Psoas muscle (tissue), 8 donors: ENCODE measurements at regions of chr1 and their contacts with region 1.

Region 1: DNA sequence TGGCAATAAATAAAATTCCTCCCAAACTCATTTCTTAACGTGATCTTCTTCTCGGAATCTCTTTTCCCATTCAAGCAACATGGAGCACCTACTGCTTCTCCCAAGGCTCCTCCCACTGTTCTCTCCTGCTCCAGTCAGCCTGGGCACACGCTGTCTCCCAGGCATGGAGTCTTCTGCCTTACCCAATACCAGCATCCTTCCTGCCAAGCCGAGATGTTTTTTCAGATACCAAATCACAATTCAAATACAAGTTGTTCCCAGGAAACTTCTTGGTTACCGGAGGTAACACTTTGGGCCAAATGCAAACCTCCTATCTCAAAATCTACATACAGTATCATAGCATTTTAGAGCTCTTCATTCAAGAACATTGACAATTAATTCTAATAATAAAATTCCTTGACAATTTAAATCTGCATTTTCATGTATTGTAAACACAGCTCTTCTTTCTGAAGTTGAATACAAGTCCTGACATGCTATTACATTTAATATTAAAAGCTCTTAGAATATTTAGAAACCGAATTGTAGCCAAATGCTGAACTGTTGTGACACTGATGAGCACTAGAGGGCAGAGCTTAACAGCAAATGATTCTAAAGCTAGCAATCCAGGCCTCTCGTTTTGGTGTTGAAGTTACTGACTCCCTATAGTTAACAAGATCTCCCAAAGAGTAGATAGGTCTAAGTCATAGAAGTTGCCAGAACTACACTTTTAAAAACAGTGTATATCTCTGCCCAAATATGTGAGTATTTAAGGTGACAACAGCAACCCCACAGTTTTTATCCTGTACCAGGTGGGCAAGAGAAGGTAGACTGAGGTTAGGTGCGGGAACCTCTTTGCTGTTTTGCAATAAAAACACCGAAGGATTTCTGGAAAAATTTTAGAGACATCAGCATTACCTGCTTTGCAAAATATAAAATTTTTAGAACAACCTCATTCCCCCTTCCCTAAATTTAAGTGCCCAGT is 52.3 kb downstream of the BCAR3 start:
- DNase-seq: no peak
- ATAC-seq: peak; percentile 78 to 89 (median 80)
- H3K4me3 ChIP-seq: no peak overlapping the region
- H3K27ac ChIP-seq: no peak overlapping the region
- H3K4me1 ChIP-seq: peaks cover 4% of the 10 kb centered on the region
- H3K27me3 ChIP-seq: no peaks in the 10 kb centered on the region
- CTCF ChIP-seq: peak; percentile 83

Region 2: DNA sequence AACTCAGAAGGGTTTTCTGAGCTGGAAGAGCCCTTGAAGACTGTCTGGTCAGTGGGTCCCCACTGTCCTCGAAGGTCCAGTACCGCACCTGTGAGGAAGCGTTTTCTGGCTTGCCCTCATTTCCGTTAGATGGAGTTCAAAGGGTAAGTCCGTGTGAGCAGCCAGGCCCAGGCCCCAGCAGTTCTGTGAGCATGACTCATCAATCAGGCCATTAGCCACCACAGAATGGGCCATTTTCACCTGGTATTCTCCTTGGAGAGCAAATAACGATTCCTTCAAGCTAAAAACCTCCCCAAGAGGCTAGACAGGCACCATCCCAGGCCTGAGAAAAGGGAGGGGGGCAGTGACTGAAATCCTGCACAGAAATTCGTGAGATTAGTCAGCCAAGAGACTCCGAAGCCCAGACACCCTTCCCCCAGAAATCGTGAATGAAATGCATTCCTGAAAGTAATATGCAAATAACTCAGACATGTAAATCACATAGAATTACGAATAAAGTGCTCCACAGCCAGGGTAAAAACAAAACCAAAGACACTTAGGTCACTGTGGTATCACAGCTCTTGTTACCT is 13.7 kb before region 1 on chr1:
- intact Hi-C with region 1: no loop called
- DNase-seq: no peak
- ATAC-seq: no peak
- H3K4me3 ChIP-seq: no peak overlapping the region
- H3K27ac ChIP-seq: peak overlapping the region; percentile 86
- H3K4me1 ChIP-seq: peaks cover 52% of the 10 kb centered on the region
- H3K27me3 ChIP-seq: no peaks in the 10 kb centered on the region
- CTCF ChIP-seq: no peak

Region 3: GRCh38 chr1:93666613-93667384 is 37.4 kb after region 1 on chr1:
- intact Hi-C with region 1: loop called in 1 of 2 experiments (anchors 5 kb)
- DNase-seq: no peak
- ATAC-seq: peak; percentile 31 to 65 (median 50)
- H3K4me3 ChIP-seq: no peak overlapping the region
- H3K27ac ChIP-seq: no peak overlapping the region
- H3K4me1 ChIP-seq: peaks cover 40% of the 10 kb centered on the region
- H3K27me3 ChIP-seq: no peaks in the 10 kb centered on the region
- CTCF ChIP-seq: no peak

Region 4: DNA sequence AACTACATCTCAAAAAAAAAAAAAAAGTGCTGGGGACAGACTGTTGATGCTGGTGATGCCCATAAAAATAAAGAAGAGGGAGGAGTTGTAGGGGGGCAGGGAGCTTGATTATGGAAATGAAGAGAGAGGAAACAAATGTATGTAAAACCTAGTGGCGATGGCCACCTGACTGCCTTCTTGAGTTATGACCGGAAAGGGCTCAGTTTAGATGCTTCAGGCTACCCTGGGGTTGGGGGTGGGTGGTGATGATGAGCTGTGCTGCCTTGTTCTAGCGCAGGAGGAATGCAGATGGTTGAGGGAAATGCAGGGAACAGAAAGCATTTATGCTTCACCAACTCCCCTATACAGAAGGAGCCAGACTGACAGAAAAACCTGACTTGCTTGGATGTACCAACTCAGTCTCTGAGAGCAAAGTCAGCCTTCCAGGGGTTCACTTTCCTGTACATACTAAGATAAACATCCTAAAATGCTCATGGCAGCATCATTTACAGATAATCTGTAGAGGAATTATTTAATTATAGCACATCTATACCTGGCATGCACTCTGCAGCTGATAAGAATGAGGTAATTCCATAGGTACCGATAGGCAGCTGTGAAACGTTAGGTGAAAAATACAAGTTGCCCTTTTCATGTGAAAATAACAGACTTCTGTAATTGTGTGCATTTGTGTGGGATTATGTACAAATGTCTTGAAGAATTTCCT is 60.3 kb after region 1 on chr1:
- intact Hi-C with region 1: loop called in 1 of 2 experiments (anchors 5 kb)
- DNase-seq: no peak
- ATAC-seq: no peak
- H3K4me3 ChIP-seq: no peak overlapping the region
- H3K27ac ChIP-seq: no peak overlapping the region
- H3K4me1 ChIP-seq: no peaks in the 10 kb centered on the region
- H3K27me3 ChIP-seq: no peaks in the 10 kb centered on the region
- CTCF ChIP-seq: no peak

Region 5: DNA sequence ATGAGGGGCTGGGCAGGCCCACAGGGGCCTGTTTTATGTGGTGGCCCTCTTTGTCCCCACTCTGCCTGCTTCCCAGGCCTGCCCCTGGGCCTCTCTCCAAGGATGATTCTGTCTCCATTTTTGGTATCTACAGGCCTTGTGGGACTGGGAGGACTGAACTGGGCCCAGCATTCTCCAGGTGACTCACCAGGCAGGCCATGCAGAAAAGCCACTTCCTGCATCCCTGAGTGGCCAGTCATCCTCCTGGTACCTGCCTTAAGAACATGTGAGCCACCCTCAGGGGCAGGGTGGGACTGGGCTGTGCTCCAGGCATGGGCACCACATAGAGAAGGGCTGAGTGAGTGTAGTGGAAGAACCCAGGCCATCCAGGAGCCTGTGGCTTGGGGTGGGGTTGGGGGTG is 72.2 kb after region 1 on chr1:
- intact Hi-C with region 1: no loop called
- DNase-seq: peak; percentile 69 to 77
- ATAC-seq: peak; percentile 88 to 91 (median 90)
- H3K4me3 ChIP-seq: no peak overlapping the region
- H3K27ac ChIP-seq: peak overlapping the region; percentile 93
- H3K4me1 ChIP-seq: peaks cover 36% of the 10 kb centered on the region
- H3K27me3 ChIP-seq: peaks cover 0 to 2% (median 0%) of the 10 kb centered on the region in 3 donors
- CTCF ChIP-seq: no peak

Region 6: DNA sequence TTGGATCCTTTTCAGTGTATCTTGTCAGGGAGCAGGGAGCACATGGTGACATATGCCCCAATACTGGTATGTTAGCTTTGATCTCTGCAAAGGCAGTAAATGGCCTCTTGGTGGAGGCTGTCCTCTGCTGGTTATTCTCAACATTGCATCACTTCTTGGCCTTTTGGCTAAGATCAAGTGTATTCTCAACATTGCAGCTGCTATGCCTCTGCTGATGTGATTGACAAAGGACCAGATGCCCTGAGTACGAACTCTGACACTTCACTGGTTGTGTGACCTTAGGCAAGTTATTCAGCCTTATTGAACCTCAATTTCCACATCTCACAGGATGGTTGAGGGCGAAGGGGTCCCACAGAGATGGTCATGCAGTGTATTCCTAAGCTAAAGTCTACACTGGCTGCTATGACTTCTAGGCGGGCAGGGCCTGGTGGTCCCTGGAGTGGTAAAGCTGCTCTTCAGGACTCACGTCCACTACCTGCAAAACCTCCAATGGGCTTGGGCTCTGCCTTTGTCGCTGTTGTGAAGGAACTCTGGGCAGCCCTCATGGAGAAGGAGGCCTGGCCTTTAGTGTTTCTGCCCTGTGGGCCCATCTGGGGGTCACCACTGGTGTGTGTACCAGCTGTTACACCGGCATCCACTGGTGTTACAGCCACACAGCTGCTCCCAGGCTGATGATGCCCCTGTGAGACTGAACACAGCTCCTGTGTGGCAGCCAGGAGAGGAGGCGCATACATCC is 184.8 kb after region 1 on chr1:
- intact Hi-C with region 1: loop called (anchors 2 kb)
- DNase-seq: no peak
- ATAC-seq: peak; percentile 84 to 97 (median 90)
- H3K4me3 ChIP-seq: no peak overlapping the region
- H3K27ac ChIP-seq: no peak overlapping the region
- H3K4me1 ChIP-seq: no peaks in the 10 kb centered on the region
- H3K27me3 ChIP-seq: no peaks in the 10 kb centered on the region
- CTCF ChIP-seq: peak; percentile 98

Region 7: GRCh38 chr1:93846211-93846991 is 217.0 kb after region 1 on chr1:
- intact Hi-C with region 1: loop called (anchors 2 to 5 kb)
- DNase-seq: peak; percentile 89 to 92
- ATAC-seq: peak; percentile 61 to 75 (median 68)
- H3K4me3 ChIP-seq: peak overlapping the region; percentile 76
- H3K27ac ChIP-seq: peak overlapping the region; percentile 92
- H3K4me1 ChIP-seq: peaks cover 27% of the 10 kb centered on the region
- H3K27me3 ChIP-seq: no peaks in the 10 kb centered on the region
- CTCF ChIP-seq: peak; percentile 40